T-cell (primary cell): ENCODE measurements at regions of chr4 and their contacts with region 1.

Region 1: GRCh38 chr4:168923526-168924194 is 86.4 kb downstream of the CBR4 start:
- DNase-seq: peak in 29 of 35 experiments; percentile 8 to 81 (median 36)
- ATAC-seq: peak in 3 of 4 experiments; percentile 41 to 65 (median 44)
- H3K4me3 ChIP-seq: no peak overlapping the region
- H3K4me3 Mint-ChIP-seq: no peak overlapping the region
- H3K27ac ChIP-seq: no peak overlapping the region
- H3K27ac Mint-ChIP-seq: no peak overlapping the region
- H3K4me1 ChIP-seq: no peaks in the 10 kb centered on the region
- H3K4me1 Mint-ChIP-seq: peaks cover 0 to 6% (median 0%) of the 10 kb centered on the region in 3 donors
- H3K27me3 ChIP-seq: no peaks in the 10 kb centered on the region
- H3K27me3 Mint-ChIP-seq: no peaks in the 10 kb centered on the region

Region 2: GRCh38 chr4:168293386-168293975 is 630.2 kb before region 1 on chr4:
- CTCF ChIA-PET with region 1: no interaction called
- POLR2A ChIA-PET with region 1: no interaction called
- DNase-seq: no peak
- ATAC-seq: no peak
- H3K4me3 ChIP-seq: no peak overlapping the region
- H3K4me3 Mint-ChIP-seq: no peak overlapping the region
- H3K27ac ChIP-seq: no peak overlapping the region
- H3K27ac Mint-ChIP-seq: no peak overlapping the region
- H3K4me1 ChIP-seq: no peaks in the 10 kb centered on the region
- H3K4me1 Mint-ChIP-seq: peaks cover 4 to 18% (median 9%) of the 10 kb centered on the region in 3 donors
- H3K27me3 ChIP-seq: no peaks in the 10 kb centered on the region
- H3K27me3 Mint-ChIP-seq: no peaks in the 10 kb centered on the region

Region 3: DNA sequence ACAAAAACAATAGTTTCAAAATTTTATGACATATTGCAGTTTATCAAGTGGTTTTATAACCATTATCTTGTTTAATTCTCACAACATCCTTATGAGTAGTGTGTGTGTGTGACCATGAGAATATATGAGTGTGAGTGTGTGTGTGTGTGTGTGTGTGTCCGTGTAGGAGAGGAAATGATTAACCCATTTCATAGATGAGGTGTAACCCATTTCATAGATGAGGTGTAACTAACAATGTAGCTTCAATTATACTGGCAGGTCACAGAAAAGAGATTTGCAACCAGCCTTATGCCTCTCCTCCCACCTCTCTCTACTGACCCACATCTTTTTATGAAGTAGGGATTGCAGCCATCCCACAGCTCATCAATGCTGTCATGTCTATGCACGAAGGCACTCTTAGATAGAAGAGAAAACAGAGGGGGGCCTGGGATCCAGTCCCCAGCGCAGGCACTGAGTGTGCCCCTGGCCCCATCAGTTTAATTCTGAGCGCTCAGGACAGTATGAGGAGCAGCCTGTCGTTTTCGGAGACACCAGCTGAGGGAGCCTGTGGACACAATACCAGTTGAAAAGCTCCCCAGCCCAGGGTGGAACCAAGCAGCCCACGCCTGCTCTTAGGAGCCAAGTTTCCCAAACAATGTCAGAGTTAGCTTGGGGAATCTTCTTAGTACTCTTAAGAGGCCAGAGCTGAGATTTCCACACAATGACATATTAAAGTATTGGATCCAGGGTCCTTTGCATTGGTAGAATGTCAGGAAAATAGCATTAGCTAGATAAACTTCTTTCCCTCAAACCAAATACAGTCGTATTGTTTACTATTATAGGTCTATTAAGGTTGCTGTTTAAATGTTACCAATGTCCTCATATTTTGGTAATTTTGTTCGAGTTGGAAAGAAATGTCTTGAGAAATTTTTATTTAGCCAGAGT is 338.2 kb before region 1 on chr4:
- CTCF ChIA-PET with region 1: interaction called in 1 of 2 experiments, 13 read pairs
- POLR2A ChIA-PET with region 1: no interaction called
- DNase-seq: peak in 6 of 35 experiments; percentile 0 to 16 (median 1)
- ATAC-seq: no peak
- H3K4me3 ChIP-seq: no peak overlapping the region
- H3K4me3 Mint-ChIP-seq: no peak overlapping the region
- H3K27ac ChIP-seq: no peak overlapping the region
- H3K27ac Mint-ChIP-seq: no peak overlapping the region
- H3K4me1 ChIP-seq: no peaks in the 10 kb centered on the region
- H3K4me1 Mint-ChIP-seq: no peaks in the 10 kb centered on the region
- H3K27me3 ChIP-seq: peaks cover 0 to 8% of the 10 kb centered on the region in 2 experiments
- H3K27me3 Mint-ChIP-seq: peaks cover 17 to 22% of the 10 kb centered on the region in 2 donors

Region 4: GRCh38 chr4:168598191-168598590 is 325.5 kb before region 1 on chr4:
- CTCF ChIA-PET with region 1: interaction called in 1 of 2 experiments, 10 read pairs
- POLR2A ChIA-PET with region 1: no interaction called
- DNase-seq: no peak
- ATAC-seq: no peak
- H3K4me3 ChIP-seq: no peak overlapping the region
- H3K4me3 Mint-ChIP-seq: no peak overlapping the region
- H3K27ac ChIP-seq: no peak overlapping the region
- H3K27ac Mint-ChIP-seq: no peak overlapping the region
- H3K4me1 ChIP-seq: no peaks in the 10 kb centered on the region
- H3K4me1 Mint-ChIP-seq: no peaks in the 10 kb centered on the region
- H3K27me3 ChIP-seq: peaks cover 0 to 3% of the 10 kb centered on the region in 2 experiments
- H3K27me3 Mint-ChIP-seq: peaks cover 4% of the 10 kb centered on the region in 2 donors

Region 5: DNA sequence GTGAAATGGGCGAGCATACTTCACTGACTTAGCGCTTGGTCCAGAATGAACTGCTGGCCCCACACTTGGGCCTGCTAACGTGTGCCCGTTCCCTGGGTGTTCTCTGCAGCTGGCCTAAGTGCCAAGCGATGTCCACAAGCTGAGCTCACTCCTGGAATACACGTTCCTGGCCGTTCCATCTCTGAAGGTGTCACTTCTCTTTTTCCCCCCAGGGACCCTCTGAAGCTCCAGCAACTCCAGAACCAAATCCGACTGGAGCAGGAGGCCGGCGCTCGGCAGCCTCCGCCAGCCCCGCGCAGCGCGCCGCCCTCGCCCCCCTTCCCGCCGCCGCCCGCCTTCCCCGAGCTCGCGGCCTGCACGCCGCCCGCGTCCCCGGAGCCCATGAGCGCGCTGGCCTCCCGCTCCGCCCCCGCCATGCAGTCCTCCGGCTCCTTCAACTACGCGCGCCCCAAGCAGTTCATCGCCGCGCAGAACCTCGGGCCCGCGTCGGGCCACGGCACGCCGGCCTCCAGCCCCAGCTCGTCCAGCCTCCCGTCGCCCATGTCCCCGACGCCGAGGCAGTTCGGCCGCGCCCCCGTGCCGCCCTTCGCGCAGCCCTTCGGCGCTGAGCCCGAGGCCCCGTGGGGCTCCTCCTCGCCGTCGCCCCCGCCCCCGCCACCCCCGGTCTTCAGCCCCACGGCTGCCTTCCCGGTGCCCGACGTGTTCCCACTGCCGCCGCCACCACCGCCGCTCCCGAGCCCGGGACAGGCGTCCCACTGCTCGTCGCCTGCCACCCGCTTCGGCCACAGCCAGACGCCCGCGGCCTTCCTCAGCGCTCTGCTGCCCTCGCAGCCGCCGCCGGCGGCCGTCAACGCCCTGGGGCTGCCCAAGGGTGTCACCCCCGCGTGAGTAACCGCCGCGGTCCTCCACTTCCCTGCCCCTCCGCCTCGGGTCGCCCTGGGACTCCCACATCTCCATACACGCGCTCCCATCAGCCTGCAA is 45.9 kb before region 1 on chr4:
- CTCF ChIA-PET with region 1: interaction called in 1 of 2 experiments, 10 read pairs
- POLR2A ChIA-PET with region 1: no interaction called
- DNase-seq: peak in 21 of 35 experiments; percentile 1 to 43 (median 8)
- ATAC-seq: peak; percentile 58 to 70 (median 66)
- H3K4me3 ChIP-seq: peak overlapping the region in 1 of 2 donors; percentile 51
- H3K4me3 Mint-ChIP-seq: peak overlapping the region; percentile 67 to 86 (median 72)
- H3K27ac ChIP-seq: no peak overlapping the region
- H3K27ac Mint-ChIP-seq: peak overlapping the region in 1 of 2 donors; percentile 73
- H3K4me1 ChIP-seq: peaks cover 0 to 4% of the 10 kb centered on the region in 2 experiments
- H3K4me1 Mint-ChIP-seq: peaks cover 6 to 18% (median 7%) of the 10 kb centered on the region in 3 donors
- H3K27me3 ChIP-seq: peaks cover 0 to 20% of the 10 kb centered on the region in 2 experiments
- H3K27me3 Mint-ChIP-seq: peaks cover 54 to 63% of the 10 kb centered on the region in 2 donors

Region 6: GRCh38 chr4:169010125-169011023 is 86.7 kb after region 1 on chr4 and contains the start of gene CBR4:
- CTCF ChIA-PET with region 1: interaction called, 6 to 25 read pairs
- POLR2A ChIA-PET with region 1: interaction called in 1 of 2 experiments, 3 read pairs
- DNase-seq: peak; percentile 88 to 99 (median 96)
- ATAC-seq: peak; percentile 95 to 97 (median 97)
- H3K4me3 ChIP-seq: peak within 1 kb of the TSS; percentile 69 to 94
- H3K4me3 Mint-ChIP-seq: peak within 1 kb of the TSS; percentile 89 to 97 (median 91)
- H3K27ac ChIP-seq: peak within 1 kb of the TSS; percentile 86
- H3K27ac Mint-ChIP-seq: peak within 1 kb of the TSS; percentile 91 to 94
- H3K4me1 ChIP-seq: peaks cover 15% of the 10 kb centered on the region in 2 experiments
- H3K4me1 Mint-ChIP-seq: peaks cover 36 to 54% (median 40%) of the 10 kb centered on the region in 3 donors
- H3K27me3 ChIP-seq: no peaks in the 10 kb centered on the region
- H3K27me3 Mint-ChIP-seq: no peaks in the 10 kb centered on the region
- total RNA-seq, gene CBR4: 13.8 to 24.3 (median 18.0) TPM

Region 7: DNA sequence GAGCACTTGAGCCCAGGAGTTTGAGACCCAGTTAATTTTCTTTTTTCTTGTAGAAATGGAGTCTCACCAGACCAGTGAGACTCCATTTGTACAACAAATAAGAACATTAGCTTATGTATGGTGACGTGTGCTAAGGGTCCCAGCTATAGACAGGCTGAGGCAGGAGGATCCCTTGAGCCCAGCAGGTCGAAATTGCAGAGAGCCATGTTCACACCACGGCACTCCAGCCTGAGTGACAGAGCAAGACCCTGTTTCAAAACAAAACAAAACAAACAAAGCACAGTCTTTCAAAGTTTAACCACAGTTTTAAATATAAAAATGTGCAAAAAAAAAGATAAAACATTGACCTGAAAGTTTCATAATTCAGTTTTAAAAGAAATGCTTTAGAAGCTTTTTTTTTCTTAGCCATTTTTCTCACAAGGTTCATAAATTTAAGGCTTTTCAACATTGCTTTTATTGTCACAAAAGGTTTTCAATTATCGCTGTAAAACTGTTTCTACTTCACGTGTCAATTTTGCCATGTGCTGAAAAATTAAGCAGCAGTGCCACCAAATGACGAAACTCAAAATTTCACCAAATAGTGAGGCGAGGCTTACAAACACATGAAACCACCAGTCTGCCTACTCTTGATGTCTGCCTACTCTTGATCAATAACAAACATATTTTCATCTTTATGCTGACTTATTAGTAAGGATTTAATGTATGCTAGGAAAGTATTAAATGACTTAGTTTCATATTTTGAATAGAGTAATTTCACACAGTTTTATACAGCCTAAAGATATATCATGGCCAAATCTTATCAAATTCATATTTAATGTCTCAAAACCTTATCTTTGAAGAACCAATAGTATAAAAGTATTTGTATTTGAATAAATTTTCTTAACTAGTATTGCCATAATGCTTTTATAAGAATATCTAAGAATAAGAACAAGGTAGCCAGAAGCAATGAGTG is 562.4 kb after region 1 on chr4:
- CTCF ChIA-PET with region 1: interaction called, 9 to 15 read pairs
- POLR2A ChIA-PET with region 1: interaction called in 1 of 2 experiments, 4 read pairs
- DNase-seq: peak in 14 of 35 experiments; percentile 3 to 61 (median 12)
- ATAC-seq: no peak
- H3K4me3 ChIP-seq: no peak overlapping the region
- H3K4me3 Mint-ChIP-seq: no peak overlapping the region
- H3K27ac ChIP-seq: no peak overlapping the region
- H3K27ac Mint-ChIP-seq: no peak overlapping the region
- H3K4me1 ChIP-seq: no peaks in the 10 kb centered on the region
- H3K4me1 Mint-ChIP-seq: peaks cover 0 to 2% (median 1%) of the 10 kb centered on the region in 3 donors
- H3K27me3 ChIP-seq: no peaks in the 10 kb centered on the region
- H3K27me3 Mint-ChIP-seq: no peaks in the 10 kb centered on the region

Region 8: DNA sequence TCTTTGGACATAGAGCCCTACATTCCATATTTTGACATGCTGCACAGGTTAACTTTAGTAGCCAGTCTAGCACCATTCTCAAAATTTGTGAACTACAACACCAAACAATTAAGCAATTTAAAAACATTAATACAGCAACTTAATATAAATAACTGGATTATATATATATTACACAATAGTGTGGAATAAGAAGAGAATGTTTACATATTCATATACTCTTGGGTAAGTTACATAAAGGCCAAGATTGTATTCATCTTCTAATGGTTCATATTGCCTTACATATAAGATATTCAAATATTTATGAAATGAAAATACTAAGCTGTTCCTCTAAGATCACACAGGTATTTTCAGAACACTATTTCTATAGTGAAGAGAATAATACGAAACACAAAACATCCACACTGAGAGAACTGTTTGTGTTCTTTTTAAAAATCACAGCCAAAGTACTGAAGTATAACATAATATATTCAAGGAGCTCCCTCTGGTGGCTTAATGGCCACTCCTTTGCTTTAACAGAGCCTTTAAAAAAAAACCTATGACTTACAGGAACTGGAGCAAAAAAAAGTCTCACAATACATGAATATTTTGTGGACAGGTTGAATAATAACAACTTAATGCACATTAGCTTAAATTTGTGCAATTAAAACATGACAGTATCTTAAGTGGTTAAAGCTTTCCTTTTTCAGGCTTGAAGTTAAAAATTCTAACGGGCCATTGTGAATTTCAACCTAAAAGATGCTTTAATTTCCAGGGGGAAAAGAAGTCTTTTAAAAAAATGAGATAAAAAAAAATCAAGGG is 642.6 kb after region 1 on chr4:
- CTCF ChIA-PET with region 1: interaction called, 4 to 21 read pairs
- POLR2A ChIA-PET with region 1: no interaction called
- DNase-seq: peak in 15 of 35 experiments; percentile 4 to 60 (median 14)
- ATAC-seq: peak in 2 of 4 experiments; percentile 40 to 57
- H3K4me3 ChIP-seq: no peak overlapping the region
- H3K4me3 Mint-ChIP-seq: no peak overlapping the region
- H3K27ac ChIP-seq: no peak overlapping the region
- H3K27ac Mint-ChIP-seq: peak overlapping the region in 1 of 2 donors; percentile 79
- H3K4me1 ChIP-seq: no peaks in the 10 kb centered on the region
- H3K4me1 Mint-ChIP-seq: peaks cover 5 to 6% (median 6%) of the 10 kb centered on the region in 3 donors
- H3K27me3 ChIP-seq: no peaks in the 10 kb centered on the region
- H3K27me3 Mint-ChIP-seq: no peaks in the 10 kb centered on the region